Mammary epithelial cell (primary cell): ENCODE measurements at regions of chr12 and their contacts with region 1.

Region 1: GRCh38 chr12:95336390-95337067 is 118.9 kb downstream of the VEZT start:
- DNase-seq: peak; percentile 61
- H3K4me3 ChIP-seq: no peak overlapping the region
- H3K27ac ChIP-seq: no peak overlapping the region
- H3K4me1 ChIP-seq: peaks cover 6% of the 10 kb centered on the region
- H3K27me3 ChIP-seq: no peaks in the 10 kb centered on the region
- CTCF ChIP-seq: peak; percentile 88 to 90

Region 2: DNA sequence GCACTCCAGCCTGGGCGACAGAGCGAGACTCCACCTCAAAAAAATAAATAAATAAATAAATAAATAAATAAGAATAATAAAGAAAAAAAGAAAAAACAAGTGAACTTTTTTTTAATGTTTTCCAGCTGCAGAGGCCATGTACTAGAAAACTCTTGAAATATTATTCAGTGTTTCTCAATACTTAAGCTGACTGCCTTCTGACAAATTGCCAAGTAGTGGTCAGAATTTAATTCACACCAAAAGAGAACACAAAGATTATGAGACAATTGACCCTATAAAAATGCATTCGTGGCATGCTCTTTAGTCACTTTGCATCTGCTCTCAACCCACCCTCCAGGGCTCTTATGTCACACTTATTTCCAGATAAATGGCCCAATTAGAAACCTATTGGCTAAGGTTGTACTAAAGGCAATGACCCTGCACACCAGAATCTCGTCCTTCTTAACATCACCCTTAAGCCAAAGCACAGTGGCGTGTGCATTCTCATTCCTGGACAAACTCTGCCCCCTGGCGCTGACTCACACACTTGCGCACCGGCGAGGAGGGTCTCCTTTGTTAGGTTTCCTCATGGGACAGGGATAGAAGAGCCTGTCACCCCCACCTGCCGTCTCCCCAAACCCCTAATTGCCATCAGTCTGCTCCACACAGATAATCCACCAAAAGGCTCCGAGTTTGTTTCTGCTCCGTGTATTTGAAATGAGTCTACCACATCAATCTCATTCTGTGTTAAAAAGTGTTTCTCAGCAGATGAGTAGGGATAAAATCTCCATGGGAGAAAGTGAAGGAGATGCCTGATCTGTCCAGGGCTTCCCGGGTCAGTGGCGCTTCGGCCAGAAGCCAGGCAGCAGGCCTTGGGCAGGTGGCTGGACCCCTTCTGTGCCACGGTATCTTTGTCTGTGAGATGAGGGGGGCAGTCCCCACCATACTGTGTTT is 803.8 kb before region 1 on chr12:
- CTCF ChIA-PET with region 1: no interaction called
- dilution Hi-C with region 1: no loop called
- in situ Hi-C with region 1: loop called in 1 of 2 experiments (anchors 25 kb)
- intact Hi-C with region 1: no loop called
- DNase-seq: peak; percentile 32
- H3K4me3 ChIP-seq: no peak overlapping the region
- H3K27ac ChIP-seq: no peak overlapping the region
- H3K4me1 ChIP-seq: no peaks in the 10 kb centered on the region
- H3K27me3 ChIP-seq: no peaks in the 10 kb centered on the region
- CTCF ChIP-seq: peak; percentile 64 to 80

Region 3: DNA sequence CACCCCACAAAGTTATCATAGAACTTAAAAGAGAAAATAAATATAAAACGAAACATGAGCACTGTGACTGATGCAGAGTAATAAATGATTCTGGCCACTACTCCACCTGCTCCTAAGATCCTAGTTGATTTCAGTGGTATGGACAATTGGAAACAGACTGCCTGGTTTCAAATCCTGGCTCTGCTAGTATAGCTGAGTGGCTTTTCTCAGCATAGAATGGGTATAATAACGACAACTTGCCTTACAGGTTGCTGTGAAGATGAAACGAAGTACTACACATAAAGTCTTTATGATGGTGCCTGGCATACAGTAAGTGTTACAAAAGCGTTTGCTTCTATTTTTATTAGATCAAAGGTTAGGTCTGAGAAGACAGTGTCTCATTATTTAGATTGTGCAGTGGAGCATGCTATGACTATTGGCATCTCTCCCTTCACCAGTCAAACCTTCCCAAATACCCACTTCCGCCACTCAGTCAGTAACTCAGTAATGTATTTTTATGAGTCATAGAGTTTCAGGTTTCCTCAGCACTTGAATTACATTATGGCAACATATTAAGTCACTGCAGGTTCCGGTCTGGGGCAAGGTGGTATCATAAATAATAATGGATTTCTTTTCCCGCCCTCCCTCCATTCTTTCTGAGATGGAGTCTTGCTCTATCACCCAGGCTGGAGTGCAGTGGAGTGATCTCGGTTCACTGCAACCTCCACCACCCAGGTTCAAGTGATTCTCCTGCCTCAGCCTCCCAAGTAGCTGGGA is 233.4 kb before region 1 on chr12:
- CTCF ChIA-PET with region 1: interaction called, 23 read pairs
- dilution Hi-C with region 1: no loop called
- in situ Hi-C with region 1: no loop called
- intact Hi-C with region 1: loop called (anchors 5 kb)
- DNase-seq: peak; percentile 98
- H3K4me3 ChIP-seq: no peak overlapping the region
- H3K27ac ChIP-seq: peak overlapping the region; percentile 78
- H3K4me1 ChIP-seq: peaks cover 22% of the 10 kb centered on the region
- H3K27me3 ChIP-seq: no peaks in the 10 kb centered on the region
- CTCF ChIP-seq: no peak

Region 4: GRCh38 chr12:95304673-95305198 is 31.8 kb before region 1 on chr12:
- CTCF ChIA-PET with region 1: no interaction called
- dilution Hi-C with region 1: no loop called
- in situ Hi-C with region 1: no loop called
- intact Hi-C with region 1: no loop called
- DNase-seq: no peak
- H3K4me3 ChIP-seq: no peak overlapping the region
- H3K27ac ChIP-seq: no peak overlapping the region
- H3K4me1 ChIP-seq: peaks cover 7% of the 10 kb centered on the region
- H3K27me3 ChIP-seq: no peaks in the 10 kb centered on the region
- CTCF ChIP-seq: no peak

Region 5: GRCh38 chr12:95368931-95369330 is 32.4 kb after region 1 on chr12:
- CTCF ChIA-PET with region 1: no interaction called
- dilution Hi-C with region 1: no loop called
- in situ Hi-C with region 1: no loop called
- intact Hi-C with region 1: no loop called
- DNase-seq: no peak
- H3K4me3 ChIP-seq: no peak overlapping the region
- H3K27ac ChIP-seq: no peak overlapping the region
- H3K4me1 ChIP-seq: no peaks in the 10 kb centered on the region
- H3K27me3 ChIP-seq: no peaks in the 10 kb centered on the region
- CTCF ChIP-seq: no peak

Region 6: GRCh38 chr12:95473884-95474659 is 137.5 kb after region 1 on chr12 and contains the start of gene METAP2:
- CTCF ChIA-PET with region 1: no interaction called
- dilution Hi-C with region 1: no loop called
- in situ Hi-C with region 1: no loop called
- intact Hi-C with region 1: loop called (anchors 5 kb)
- DNase-seq: peak; percentile 98
- H3K4me3 ChIP-seq: peak within 1 kb of the TSS; percentile 69 to 99 (median 89)
- H3K27ac ChIP-seq: peak within 1 kb of the TSS; percentile 93
- H3K4me1 ChIP-seq: peaks cover 5% of the 10 kb centered on the region
- H3K27me3 ChIP-seq: no peaks in the 10 kb centered on the region
- CTCF ChIP-seq: no peak
- total RNA-seq, gene METAP2: 42.0 to 89.8 TPM